Common myeloid progenitor, CD34-positive (primary cell): ENCODE measurements at regions of chr5 and their contacts with region 1.

Region 1: GRCh38 chr5:76838481-76839261 is 11.1 kb upstream of the S100Z start:
- DNase-seq: no peak
- H3K4me3 ChIP-seq: no peak overlapping the region
- H3K27ac ChIP-seq: no peak overlapping the region
- H3K4me1 ChIP-seq: peaks cover 0 to 17% (median 3%) of the 10 kb centered on the region in 4 experiments
- H3K27me3 ChIP-seq: no peaks in the 10 kb centered on the region

Region 2: GRCh38 chr5:76849419-76850291 is 11.0 kb after region 1 on chr5 and contains the start of gene S100Z:
- CTCF ChIA-PET with region 1: interaction called, 12 read pairs
- POLR2A ChIA-PET with region 1: interaction called, 3 read pairs
- DNase-seq: peak; percentile 90 to 98 (median 95)
- H3K4me3 ChIP-seq: peak within 1 kb of the TSS in 6 of 7 experiments; percentile 20 to 81 (median 53)
- H3K27ac ChIP-seq: peak within 1 kb of the TSS; percentile 23 to 73
- H3K4me1 ChIP-seq: peaks cover 33 to 77% (median 68%) of the 10 kb centered on the region in 4 experiments
- H3K27me3 ChIP-seq: no peaks in the 10 kb centered on the region